Heart left ventricle (tissue), 16 donors: ENCODE measurements at regions of chr10 and their contacts with region 1.

Region 1: DNA sequence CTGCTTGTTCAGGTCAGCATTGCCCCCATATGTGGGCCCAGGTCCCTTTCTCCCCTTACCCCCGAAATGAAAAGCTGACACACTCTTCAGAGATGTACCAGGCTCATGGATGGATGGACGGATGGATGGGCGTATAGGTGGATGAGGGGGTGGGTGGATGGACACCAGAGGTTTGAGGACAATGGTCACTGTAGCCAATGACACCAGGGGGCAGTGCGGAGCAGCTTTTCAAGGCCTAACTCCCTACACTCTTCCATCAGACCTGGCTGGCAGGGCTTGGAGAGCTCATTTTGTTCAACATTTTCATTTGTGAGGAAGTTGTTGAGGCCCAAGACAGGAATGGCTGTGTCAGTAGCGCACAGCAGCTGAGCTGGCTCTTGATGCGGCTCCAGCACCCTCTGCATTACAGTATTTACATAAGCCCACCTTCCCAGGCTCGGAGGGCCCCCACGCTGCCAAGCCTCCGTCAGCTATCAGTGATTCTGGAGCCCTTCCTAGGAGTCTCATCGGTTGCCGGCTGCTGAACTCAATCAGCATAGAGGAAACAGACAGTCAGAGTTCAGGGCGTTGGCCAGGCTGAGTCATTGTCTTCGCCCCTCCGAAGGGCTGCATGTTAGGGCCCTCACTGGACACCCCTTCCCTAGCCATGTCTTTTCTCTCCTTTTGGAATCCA is 11.6 kb upstream of the FFAR4 start:
- DNase-seq: peak; percentile 58 to 81 (median 61)
- ATAC-seq: peak in 3 of 4 donors; percentile 84 to 89 (median 89)
- H3K4me3 ChIP-seq: no peak overlapping the region
- H3K27ac ChIP-seq: peak overlapping the region in 1 of 12 donors; percentile 62
- H3K4me1 ChIP-seq: peaks cover 0 to 21% (median 0%) of the 10 kb centered on the region in 12 donors
- H3K27me3 ChIP-seq: no peaks in the 10 kb centered on the region
- CTCF ChIP-seq: peak; percentile 47 to 73 (median 60)
- POLR2A ChIP-seq: no peak

Region 2: DNA sequence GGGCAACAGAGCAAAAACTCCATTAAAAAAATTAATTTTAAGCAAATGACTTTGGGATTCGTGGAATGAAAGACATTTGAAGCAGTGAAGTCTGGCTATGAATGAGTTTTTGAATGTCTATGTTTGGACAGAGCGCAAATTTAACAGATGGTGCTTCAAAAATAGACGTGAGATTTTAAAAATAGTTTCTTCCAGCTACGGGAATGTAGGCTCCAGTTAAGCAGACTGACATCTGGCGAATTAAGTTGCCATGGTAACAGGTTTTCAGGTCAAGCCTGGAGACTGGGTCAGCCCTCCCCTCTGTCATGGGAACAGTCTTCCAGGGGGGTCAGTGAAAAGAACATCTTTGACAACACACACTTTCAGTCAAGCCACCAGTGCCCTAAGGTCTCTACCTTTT is 134.8 kb before region 1 on chr10:
- intact Hi-C with region 1: no loop called
- DNase-seq: peak in 3 of 5 donors; percentile 55 to 76 (median 62)
- ATAC-seq: peak; percentile 43 to 73 (median 62)
- H3K4me3 ChIP-seq: no peak overlapping the region
- H3K27ac ChIP-seq: peak overlapping the region in 11 of 12 donors; percentile 45 to 83 (median 68)
- H3K4me1 ChIP-seq: peaks cover 0 to 66% (median 41%) of the 10 kb centered on the region in 12 donors
- H3K27me3 ChIP-seq: no peaks in the 10 kb centered on the region
- CTCF ChIP-seq: no peak
- POLR2A ChIP-seq: no peak

Region 3: GRCh38 chr10:93672022-93672678 is 117.3 kb after region 1 on chr10:
- intact Hi-C with region 1: loop called in 1 of 10 experiments (anchors 10 kb)
- DNase-seq: no peak
- ATAC-seq: no peak
- H3K4me3 ChIP-seq: no peak overlapping the region
- H3K27ac ChIP-seq: no peak overlapping the region
- H3K4me1 ChIP-seq: no peaks in the 10 kb centered on the region
- H3K27me3 ChIP-seq: no peaks in the 10 kb centered on the region
- CTCF ChIP-seq: no peak
- POLR2A ChIP-seq: no peak

Region 4: GRCh38 chr10:93804200-93804599 is 249.3 kb after region 1 on chr10:
- intact Hi-C with region 1: no loop called
- DNase-seq: no peak
- ATAC-seq: no peak
- H3K4me3 ChIP-seq: no peak overlapping the region
- H3K27ac ChIP-seq: no peak overlapping the region
- H3K4me1 ChIP-seq: peaks cover 0 to 12% (median 0%) of the 10 kb centered on the region in 12 donors
- H3K27me3 ChIP-seq: peaks cover 0 to 22% (median 0%) of the 10 kb centered on the region in 9 donors
- CTCF ChIP-seq: no peak
- POLR2A ChIP-seq: no peak